Lower leg skin (tissue), 4 donors: ENCODE measurements at regions of chr12 and their contacts with region 1.

Region 1: DNA sequence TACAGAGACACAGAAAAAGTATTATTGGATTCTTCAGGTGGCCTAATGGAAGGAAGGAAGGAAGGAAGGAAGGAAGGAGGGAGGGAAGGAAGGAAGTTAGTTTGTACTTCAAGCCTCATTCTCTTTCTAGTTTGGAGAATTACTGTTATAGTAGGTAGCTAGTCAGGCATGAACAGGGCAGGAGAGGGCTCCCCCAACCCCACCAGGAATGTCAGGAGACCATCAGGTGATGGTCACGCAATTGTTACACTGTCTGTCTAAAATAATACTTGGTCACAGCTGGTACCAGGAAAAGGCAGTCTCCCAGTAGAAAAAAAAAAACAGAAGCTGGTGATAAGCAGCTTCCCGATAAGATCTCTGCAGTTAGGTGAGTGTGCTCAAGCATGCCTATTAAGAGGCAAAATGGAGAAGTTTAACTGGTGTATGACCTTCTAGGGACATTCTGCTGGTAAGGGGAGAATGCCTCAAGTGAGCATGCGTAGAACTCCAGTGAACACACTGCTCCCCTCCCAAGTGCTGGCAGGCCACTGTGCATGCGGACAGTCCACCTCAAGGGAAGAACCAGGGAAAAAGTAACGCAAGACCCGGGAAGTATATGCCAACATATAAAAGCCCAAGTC is 358.4 kb upstream of the SOX5 start:
- DNase-seq: no peak
- H3K4me3 ChIP-seq: no peak overlapping the region
- CTCF ChIP-seq: no peak
- POLR2A ChIP-seq: no peak

Region 2: GRCh38 chr12:23472329-23472971 is 835.4 kb before region 1 on chr12:
- intact Hi-C with region 1: loop called (anchors 5 kb)
- DNase-seq: peak in 1 of 2 donors; percentile 26
- H3K4me3 ChIP-seq: no peak overlapping the region
- CTCF ChIP-seq: no peak
- POLR2A ChIP-seq: no peak

Region 3: DNA sequence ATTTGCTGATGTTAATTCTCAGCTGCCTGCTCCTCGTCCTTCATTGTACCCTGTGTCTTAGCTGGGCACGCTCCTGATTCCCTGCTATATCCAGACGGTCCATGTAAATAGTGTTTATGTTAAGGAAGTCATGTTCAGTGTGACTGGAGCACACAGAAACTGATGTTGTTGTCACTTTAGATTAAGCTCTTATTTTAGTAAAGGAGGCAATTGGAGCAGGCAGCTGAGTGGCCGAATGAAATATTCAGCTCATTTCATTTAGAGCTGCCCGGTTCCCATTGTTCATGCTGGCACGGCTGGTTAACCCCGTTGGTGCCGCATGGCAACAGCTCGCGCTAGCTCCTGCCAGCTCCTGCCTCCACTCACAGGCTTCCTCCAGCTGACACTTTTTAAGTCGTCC is 88.4 kb after region 1 on chr12:
- intact Hi-C with region 1: no loop called
- DNase-seq: no peak
- H3K4me3 ChIP-seq: no peak overlapping the region
- CTCF ChIP-seq: no peak
- POLR2A ChIP-seq: no peak